ENCODE measurements at regions of chr1 and their contacts with region 1.

Region 1: DNA sequence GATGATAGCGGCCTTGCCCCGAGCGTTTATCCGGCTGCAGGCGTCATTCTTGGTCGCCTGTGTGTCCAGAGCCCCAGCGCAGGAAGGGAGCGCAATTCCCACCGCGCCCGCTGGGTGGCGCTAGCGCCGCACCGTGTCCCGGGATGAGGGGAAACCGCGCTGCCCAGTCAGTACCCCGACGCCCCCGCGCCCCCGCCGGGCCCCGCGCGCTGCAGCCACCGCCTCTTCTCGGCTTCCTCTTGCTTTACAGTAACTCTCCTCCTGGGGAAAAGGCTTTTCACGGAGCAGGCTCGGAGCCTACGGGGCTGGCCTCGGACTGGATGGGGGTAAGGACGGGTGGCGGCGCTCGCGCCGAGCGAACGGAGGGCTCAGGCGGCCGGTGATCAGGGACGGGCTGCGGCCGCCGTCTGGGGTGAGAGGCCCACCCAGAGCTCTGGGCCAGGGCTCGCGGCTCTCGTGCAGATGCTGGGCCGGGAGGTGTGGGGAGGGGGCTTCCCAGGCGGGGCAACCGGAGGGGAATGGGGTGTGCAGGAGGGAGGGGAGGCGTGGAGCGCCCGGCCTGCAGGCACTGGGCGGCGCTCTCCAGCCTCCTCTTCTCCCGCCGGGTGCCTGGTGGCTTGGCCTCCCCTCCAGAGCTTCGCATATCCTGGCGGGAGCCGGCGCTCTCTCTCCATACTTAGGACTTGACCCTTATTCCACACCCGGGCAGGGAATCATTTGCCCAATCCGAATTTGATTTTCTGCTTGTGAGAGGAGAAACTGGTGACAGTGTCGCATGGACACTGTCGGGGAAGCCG is 29.8 kb downstream of the TEX35 start:
- DNase-seq: peak; percentile 73 to 90
- ATAC-seq: peak; percentile 75

Region 2: DNA sequence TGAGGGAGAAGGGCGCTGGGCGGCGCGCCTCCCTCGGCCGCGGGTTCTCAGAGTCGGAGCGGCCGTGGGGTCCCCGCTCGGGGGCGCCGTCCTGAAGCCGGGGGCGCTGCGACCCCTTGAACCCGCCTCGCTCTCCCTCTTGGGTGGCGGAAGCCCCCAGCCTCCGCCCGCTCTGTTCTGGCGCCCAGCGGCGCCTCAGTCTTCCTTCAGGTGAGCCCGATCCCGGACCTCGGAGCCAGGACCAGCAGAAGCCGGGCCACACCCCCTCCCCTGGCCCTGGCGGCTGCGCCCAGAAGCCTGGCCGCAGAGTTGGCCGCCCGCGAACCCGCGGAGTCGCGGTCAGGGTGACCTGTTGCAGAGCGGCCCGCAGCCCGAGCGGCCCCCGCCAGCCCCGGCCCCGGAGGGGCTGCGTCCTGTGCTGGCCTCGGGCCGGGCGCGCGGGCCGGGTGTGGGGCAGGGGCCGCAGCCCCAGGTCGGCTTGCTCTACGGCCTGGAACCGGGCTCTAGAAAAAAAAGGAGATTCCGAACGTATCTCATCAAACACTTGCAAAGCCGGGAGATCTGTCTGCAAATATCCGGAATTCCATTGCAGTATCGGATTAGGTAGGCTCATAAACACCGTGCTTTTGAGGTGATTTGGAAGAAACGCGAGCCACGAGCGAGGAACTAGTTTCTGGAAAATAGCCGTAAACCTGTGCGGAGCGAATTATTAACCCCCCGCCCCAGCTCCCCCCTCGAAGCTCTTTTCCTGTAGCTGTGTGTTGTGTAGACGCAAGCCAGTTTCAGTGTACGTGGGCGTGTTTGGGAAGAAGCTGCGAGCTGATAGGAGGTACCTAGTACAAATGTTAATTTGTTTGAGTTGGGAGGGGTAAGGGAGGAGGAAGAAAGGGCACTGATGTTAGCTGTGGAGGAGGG is 183.1 kb after region 1 on chr1:
- intact Hi-C with region 1: loop called in 1 of 2 experiments (anchors 10 kb)
- DNase-seq: peak; percentile 83 to 92
- ATAC-seq: peak; percentile 86

Region 3: GRCh38 chr1:178749581-178750166 is 206.9 kb after region 1 on chr1:
- intact Hi-C with region 1: loop called (anchors 5 kb)
- DNase-seq: no peak
- ATAC-seq: peak; percentile 35

Region 4: DNA sequence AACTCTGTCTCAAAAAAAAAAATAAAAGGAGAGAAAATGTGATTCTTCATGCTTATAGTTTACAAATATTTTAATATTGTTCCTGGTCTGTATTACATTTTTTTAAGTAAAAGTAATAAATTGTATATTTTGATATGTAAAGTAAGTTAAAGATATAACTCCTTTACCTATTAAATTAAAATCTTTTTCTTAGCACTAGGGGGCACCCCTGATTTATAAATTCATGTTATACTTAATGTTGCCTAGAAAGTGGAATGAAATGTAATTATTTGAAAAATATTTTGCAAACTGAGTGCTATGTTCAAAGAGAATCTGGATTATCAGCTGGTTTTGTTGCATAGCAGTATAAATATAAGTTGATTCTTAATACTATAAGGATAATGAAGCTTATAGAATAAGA is 231.5 kb after region 1 on chr1:
- intact Hi-C with region 1: no loop called
- DNase-seq: no peak
- ATAC-seq: no peak